Transverse colon (tissue), 4 donors: ENCODE measurements at regions of chr2 and their contacts with region 1.

Region 1: DNA sequence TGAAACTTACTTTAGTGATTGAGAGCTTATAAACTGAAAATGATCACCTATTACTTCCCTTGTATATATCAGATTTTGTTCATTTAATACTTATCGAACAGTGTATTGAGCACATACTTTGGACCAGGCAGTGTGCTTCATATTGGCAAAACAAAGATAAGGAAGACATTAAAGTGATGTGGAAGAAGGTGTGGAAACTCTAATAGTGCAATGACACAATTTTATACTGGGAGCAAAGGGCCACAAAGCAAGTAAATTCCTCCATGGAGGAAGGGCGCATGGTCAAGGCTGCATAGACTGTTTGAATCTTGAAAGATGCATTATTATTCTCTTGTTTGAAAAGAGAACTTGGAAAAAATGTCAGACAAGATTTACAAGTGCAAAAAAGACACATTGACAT is 936.5 kb upstream of the DDX18 start:
- DNase-seq: no peak
- H3K4me3 ChIP-seq: no peak overlapping the region
- H3K27ac ChIP-seq: no peak overlapping the region
- H3K4me1 ChIP-seq: peaks cover 0 to 25% (median 8%) of the 10 kb centered on the region in 4 donors
- H3K27me3 ChIP-seq: no peaks in the 10 kb centered on the region
- CTCF ChIP-seq: no peak
- EP300 ChIP-seq: no peak
- POLR2A ChIP-seq: no peak

Region 2: DNA sequence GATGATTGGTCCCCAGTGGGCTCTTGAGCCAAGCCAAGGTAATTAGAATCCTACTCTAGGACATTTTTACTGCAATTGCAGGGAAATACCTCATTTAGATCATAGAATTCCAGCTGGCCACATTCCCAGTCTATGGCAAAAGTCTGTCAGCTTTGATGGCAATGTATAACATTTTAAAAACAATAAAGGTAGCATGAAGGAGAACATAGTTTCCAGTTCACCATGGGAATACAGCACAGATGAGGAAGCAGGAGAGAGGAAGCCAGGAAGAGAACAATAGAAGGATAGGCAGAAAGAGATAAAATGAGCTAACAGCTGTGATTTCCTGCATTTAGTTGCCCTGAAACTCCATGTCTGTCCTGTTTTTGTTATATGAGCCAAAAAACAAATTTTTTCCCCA is 39.3 kb after region 1 on chr2:
- in situ Hi-C with region 1: no loop called
- intact Hi-C with region 1: loop called (anchors 1 kb)
- DNase-seq: no peak
- H3K4me3 ChIP-seq: no peak overlapping the region
- H3K27ac ChIP-seq: no peak overlapping the region
- H3K4me1 ChIP-seq: peaks cover 0 to 4% (median 1%) of the 10 kb centered on the region in 4 donors
- H3K27me3 ChIP-seq: no peaks in the 10 kb centered on the region
- CTCF ChIP-seq: no peak
- EP300 ChIP-seq: no peak
- POLR2A ChIP-seq: no peak